Activated CD4-positive, alpha-beta memory T cell treated with anti-CD3 and anti-CD28 coated beads, Interleukin-2, amount 10 ng/mL, durations not matched to agents 7 days and 5 days (primary cell): ENCODE measurements at regions of chr20 and their contacts with region 1.

Region 1: GRCh38 chr20:44683263-44684046 is 31.7 kb upstream of the CCN5 start:
- DNase-seq: peak; percentile 66
- H3K4me3 Mint-ChIP-seq: no peak overlapping the region
- H3K27ac Mint-ChIP-seq: no peak overlapping the region
- H3K4me1 Mint-ChIP-seq: no peaks in the 10 kb centered on the region
- H3K27me3 Mint-ChIP-seq: peaks cover 3% of the 10 kb centered on the region

Region 2: DNA sequence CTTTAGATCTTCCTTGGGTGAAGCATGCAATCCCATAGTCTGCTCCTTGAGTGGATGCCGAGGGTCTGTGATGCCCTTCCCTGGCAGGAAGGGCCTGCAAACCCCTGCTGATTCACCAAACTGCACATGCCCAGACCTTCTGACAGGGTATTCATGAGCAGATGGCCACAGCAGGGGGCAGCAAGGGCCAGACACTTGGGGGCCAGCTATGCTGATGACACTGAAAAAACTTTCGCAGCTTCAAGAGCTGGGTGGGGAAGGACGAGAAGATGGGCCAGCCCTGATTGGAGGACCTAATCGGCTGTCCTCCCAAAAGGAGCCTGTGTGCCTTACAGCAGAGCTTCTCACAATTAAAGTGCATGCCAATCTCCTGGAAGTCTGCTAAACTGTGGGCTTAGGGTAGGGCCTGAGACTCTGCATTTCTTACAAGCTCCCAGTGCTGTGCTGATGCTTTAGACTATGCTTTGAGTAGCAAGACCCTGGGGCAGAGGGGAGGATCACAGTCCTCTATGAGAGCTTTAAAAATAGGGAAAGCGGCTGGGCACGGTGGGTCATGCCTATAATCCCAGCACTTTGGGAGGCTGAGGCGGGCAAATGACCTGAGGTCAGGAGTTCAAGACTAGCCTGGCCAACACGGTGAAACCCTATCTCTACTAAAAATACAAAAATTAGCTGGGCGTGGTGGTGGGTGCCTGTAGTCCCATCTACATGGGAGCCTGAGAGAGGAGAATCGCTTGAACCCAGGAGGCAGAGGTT is 451.6 kb before region 1 on chr20:
- CTCF ChIA-PET with region 1: no interaction called
- POLR2A ChIA-PET with region 1: no interaction called
- DNase-seq: no peak
- H3K4me3 Mint-ChIP-seq: no peak overlapping the region
- H3K27ac Mint-ChIP-seq: no peak overlapping the region
- H3K4me1 Mint-ChIP-seq: no peaks in the 10 kb centered on the region
- H3K27me3 Mint-ChIP-seq: no peaks in the 10 kb centered on the region

Region 3: GRCh38 chr20:44542890-44543289 is 140.6 kb before region 1 on chr20:
- CTCF ChIA-PET with region 1: no interaction called
- POLR2A ChIA-PET with region 1: no interaction called
- DNase-seq: no peak
- H3K4me3 Mint-ChIP-seq: no peak overlapping the region
- H3K27ac Mint-ChIP-seq: no peak overlapping the region
- H3K4me1 Mint-ChIP-seq: no peaks in the 10 kb centered on the region
- H3K27me3 Mint-ChIP-seq: peaks cover 4% of the 10 kb centered on the region

Region 4: GRCh38 chr20:44597930-44598329 is 85.5 kb before region 1 on chr20:
- CTCF ChIA-PET with region 1: no interaction called
- POLR2A ChIA-PET with region 1: no interaction called
- DNase-seq: no peak
- H3K4me3 Mint-ChIP-seq: no peak overlapping the region
- H3K27ac Mint-ChIP-seq: no peak overlapping the region
- H3K4me1 Mint-ChIP-seq: peaks cover 13% of the 10 kb centered on the region
- H3K27me3 Mint-ChIP-seq: no peaks in the 10 kb centered on the region

Region 5: DNA sequence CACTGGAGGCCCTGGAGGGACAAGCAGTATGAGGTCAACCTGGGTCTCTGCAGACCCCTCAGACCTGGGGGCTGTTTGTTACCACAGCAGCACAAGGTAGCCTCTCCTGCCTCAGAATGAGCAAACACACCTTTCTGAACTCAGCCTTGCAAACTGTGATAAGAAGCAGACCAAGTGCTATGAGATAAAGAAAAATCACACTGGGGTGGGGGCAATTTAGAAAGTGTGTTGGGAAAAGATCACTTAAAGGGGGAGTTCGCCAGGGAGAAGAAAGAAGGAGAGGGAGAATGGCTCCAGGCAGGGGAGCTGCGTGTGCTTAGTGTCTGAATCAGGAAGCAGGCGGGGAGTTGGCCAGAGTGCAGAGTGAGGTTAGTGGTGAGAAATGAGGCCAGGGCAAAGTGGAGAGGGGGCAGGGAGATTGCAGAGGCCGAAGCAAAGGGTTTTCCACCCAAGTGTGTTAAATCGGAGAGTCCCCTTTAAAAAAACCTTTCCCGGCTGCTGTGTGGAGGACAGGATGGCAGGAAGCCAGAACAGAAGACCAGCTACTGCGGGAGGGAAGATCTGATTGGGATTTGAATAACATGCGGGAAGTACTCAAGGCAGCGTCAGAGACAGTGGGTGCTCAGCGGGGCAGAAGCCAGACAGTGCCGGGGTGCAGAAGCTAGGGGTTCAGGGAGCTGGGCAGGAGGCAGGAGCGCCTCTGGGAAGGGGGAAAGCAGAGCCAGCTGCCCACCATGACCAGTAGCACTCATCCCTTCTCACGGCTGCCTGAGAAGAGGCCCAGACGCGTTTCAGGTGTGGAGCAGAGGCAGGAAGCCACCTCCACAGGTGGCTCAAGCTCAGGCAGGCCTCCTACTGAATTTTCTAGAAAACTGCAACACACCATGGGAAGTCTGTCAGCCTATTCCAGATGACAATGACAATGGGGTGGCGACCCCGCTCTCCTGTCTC is 41.0 kb before region 1 on chr20:
- CTCF ChIA-PET with region 1: interaction called, 26 read pairs
- POLR2A ChIA-PET with region 1: interaction called, 5 read pairs
- DNase-seq: peak; percentile 45
- H3K4me3 Mint-ChIP-seq: peak overlapping the region; percentile 37
- H3K27ac Mint-ChIP-seq: peak overlapping the region; percentile 93
- H3K4me1 Mint-ChIP-seq: peaks cover 76% of the 10 kb centered on the region
- H3K27me3 Mint-ChIP-seq: no peaks in the 10 kb centered on the region

Region 6: DNA sequence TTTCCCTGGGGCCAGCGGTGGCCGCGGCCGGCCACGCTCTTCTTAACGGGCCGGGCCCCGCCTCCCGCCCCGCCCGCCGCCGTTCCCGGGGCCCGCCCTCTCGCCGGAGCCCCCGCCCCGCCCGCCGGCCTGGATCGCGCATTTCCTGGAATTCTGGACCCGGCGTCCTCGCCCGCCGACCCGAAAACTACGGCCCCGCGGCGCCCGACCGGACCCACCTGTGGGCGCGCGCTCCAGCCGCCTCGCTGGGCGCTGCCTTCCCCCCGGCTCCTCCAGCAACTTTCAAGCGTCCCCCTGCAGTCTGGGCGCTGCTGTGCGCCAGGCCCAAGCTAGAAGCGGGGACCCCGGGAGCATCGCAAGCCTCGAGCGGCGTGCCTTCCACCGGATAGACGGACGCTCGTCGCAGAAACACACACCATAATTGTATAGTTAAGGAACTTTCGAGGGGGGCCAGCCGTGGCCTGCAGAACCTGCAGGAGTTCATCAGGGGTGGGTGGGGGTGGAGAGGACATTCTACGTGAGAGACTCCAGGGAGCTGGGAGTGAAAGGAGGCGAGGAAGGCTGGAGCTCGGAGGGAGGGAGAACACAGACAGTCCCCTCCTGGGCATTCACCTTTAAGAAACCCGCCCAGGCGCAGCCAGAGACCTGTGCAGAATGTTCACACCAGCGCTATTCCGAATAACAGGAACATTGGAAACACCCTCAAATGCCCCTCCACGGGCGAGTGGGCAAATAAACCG is 31.6 kb before region 1 on chr20 and contains the start of gene ADA:
- CTCF ChIA-PET with region 1: interaction called, 29 read pairs
- POLR2A ChIA-PET with region 1: interaction called, 5 read pairs
- DNase-seq: peak; percentile 61
- H3K4me3 Mint-ChIP-seq: peak within 1 kb of the TSS; percentile 96
- H3K27ac Mint-ChIP-seq: peak within 1 kb of the TSS; percentile 81
- H3K4me1 Mint-ChIP-seq: peaks cover 52% of the 10 kb centered on the region
- H3K27me3 Mint-ChIP-seq: no peaks in the 10 kb centered on the region
- total RNA-seq, gene ADA: 79.0 to 79.7 TPM

Region 7: DNA sequence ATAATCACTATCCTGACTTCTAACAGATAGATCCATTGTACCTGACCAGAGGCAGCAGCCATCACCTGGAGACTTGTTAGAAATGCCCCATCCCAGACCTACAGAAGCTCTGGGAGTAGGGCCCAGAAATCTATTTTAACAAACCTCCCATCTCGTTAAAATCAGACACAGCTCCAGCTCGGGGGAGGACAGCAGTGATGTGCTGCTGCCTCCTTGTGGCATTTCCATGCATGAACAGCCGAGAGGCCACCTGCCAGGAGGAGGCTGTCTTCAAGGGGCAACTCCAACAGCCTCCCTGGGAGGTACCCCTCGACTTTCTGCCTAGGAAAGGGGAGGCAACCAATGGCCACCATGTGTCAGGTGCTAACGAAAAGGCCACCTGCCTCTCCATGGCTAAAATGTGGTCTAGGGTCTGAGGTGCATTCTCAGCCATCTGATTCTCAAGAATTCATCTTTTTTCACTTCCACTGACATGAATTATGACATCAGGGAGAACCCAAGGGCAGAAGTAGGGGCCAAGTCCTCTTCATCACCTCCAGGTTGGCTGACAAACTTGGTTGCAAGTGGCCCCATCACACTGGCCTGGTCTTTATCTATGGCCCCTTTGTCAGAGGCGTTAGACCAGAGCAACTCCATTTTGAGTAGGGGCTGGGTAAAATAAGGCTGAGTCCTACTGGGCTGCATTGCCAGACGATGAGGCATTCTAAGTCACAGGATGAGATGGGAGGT is 50.0 kb after region 1 on chr20:
- CTCF ChIA-PET with region 1: interaction called, 39 read pairs
- POLR2A ChIA-PET with region 1: no interaction called
- DNase-seq: peak; percentile 68
- H3K4me3 Mint-ChIP-seq: no peak overlapping the region
- H3K27ac Mint-ChIP-seq: no peak overlapping the region
- H3K4me1 Mint-ChIP-seq: peaks cover 29% of the 10 kb centered on the region
- H3K27me3 Mint-ChIP-seq: no peaks in the 10 kb centered on the region

Region 8: GRCh38 chr20:44866703-44867335 is 183.4 kb after region 1 on chr20:
- CTCF ChIA-PET with region 1: interaction called, 23 read pairs
- POLR2A ChIA-PET with region 1: interaction called, 4 read pairs
- DNase-seq: no peak
- H3K4me3 Mint-ChIP-seq: peak overlapping the region; percentile 40
- H3K27ac Mint-ChIP-seq: no peak overlapping the region
- H3K4me1 Mint-ChIP-seq: peaks cover 12% of the 10 kb centered on the region
- H3K27me3 Mint-ChIP-seq: peaks cover 9% of the 10 kb centered on the region

Region 9: GRCh38 chr20:44990425-44990824 is 307.0 kb after region 1 on chr20:
- CTCF ChIA-PET with region 1: no interaction called
- POLR2A ChIA-PET with region 1: no interaction called
- DNase-seq: peak; percentile 50
- H3K4me3 Mint-ChIP-seq: peak overlapping the region; percentile 72
- H3K27ac Mint-ChIP-seq: peak overlapping the region; percentile 88
- H3K4me1 Mint-ChIP-seq: peaks cover 73% of the 10 kb centered on the region
- H3K27me3 Mint-ChIP-seq: no peaks in the 10 kb centered on the region